ENCODE measurements at regions of chr18 and their contacts with region 1.

Region 1: DNA sequence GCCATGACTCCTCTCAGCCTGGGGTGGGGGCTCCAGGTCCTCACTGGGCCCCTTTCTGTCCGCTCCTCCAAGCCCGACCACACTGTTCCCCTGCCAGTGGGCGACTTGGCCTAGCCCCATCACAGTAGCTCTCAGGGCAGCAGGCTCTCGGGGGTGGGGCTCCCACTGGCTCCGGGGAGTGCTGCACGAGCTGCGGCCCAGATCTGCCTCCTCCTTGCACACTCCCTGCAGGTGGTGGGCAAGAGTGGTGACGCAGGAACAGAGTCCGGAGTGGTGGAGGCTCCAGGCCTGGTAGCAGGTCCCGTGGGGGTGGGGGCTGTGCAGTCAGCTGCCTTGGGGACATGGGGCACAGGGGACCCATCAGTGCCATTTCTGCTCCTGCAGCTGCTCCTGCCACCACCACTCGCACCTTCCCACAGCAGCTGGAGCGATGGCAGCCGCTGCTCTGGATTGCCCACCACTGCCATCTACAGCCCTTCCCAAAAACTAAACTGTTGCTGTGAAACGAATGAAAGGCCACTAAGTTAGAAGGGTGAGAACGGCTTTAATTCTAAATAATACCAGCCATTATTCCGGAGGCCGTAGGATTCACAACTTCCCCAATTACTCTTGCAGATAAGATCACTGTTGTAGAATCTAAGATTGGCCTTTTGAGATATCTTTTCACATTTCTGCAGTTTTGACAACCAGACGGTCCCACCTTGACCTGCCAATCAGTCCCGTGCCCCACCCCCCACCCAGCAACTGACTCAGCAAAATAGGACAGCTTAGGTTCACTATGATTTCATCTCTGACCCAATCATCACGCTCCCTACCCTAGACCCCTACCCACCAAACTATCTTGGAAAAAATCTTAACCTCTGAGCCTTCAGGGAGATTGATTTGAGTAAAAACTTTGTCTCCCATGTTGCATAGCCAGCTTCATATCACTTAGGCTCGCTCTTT is 530.2 kb downstream of the DCC start:
- DNase-seq: peak; percentile 82
- H3K4me3 ChIP-seq: no peak overlapping the region
- H3K27ac ChIP-seq: no peak overlapping the region
- H3K4me1 ChIP-seq: peaks cover 23% of the 10 kb centered on the region
- H3K27me3 ChIP-seq: no peaks in the 10 kb centered on the region
- CTCF ChIP-seq: peak; percentile 74

Region 2: GRCh38 chr18:52694804-52695203 is 175.4 kb before region 1 on chr18:
- CTCF ChIA-PET with region 1: no interaction called
- POLR2A ChIA-PET with region 1: no interaction called
- intact Hi-C with region 1: loop called (anchors 10 kb)
- DNase-seq: peak; percentile 73
- H3K4me3 ChIP-seq: no peak overlapping the region
- H3K27ac ChIP-seq: no peak overlapping the region
- H3K4me1 ChIP-seq: peaks cover 31% of the 10 kb centered on the region
- H3K27me3 ChIP-seq: no peaks in the 10 kb centered on the region
- CTCF ChIP-seq: peak; percentile 76

Region 3: GRCh38 chr18:52781113-52781512 is 89.1 kb before region 1 on chr18:
- CTCF ChIA-PET with region 1: no interaction called
- POLR2A ChIA-PET with region 1: no interaction called
- intact Hi-C with region 1: no loop called
- DNase-seq: peak; percentile 15
- H3K4me3 ChIP-seq: no peak overlapping the region
- H3K27ac ChIP-seq: no peak overlapping the region
- H3K4me1 ChIP-seq: peaks cover 7% of the 10 kb centered on the region
- H3K27me3 ChIP-seq: no peaks in the 10 kb centered on the region
- CTCF ChIP-seq: no peak

Region 4: GRCh38 chr18:52850031-52850560 is 20.1 kb before region 1 on chr18:
- CTCF ChIA-PET with region 1: no interaction called
- POLR2A ChIA-PET with region 1: no interaction called
- intact Hi-C with region 1: no loop called
- DNase-seq: peak; percentile 23
- H3K4me3 ChIP-seq: no peak overlapping the region
- H3K27ac ChIP-seq: no peak overlapping the region
- H3K4me1 ChIP-seq: peaks cover 18% of the 10 kb centered on the region
- H3K27me3 ChIP-seq: no peaks in the 10 kb centered on the region
- CTCF ChIP-seq: no peak

Measured in A673 (cell line).